ENCODE measurements at regions of chr18 and their contacts with region 1.

Region 1: GRCh38 chr18:9613550-9614400 is 584 bp downstream of the PPP4R1 start:
- DNase-seq: no peak
- ATAC-seq: peak; percentile 58
- H3K4me3 ChIP-seq: peak overlapping the region; percentile 79 to 87
- H3K27ac ChIP-seq: peak overlapping the region; percentile 88
- H3K4me1 ChIP-seq: peaks cover 45% of the 10 kb centered on the region
- H3K27me3 ChIP-seq: no peaks in the 10 kb centered on the region
- CTCF ChIP-seq: no peak

Region 2: GRCh38 chr18:9323750-9324445 is 289.9 kb before region 1 on chr18:
- CTCF ChIA-PET with region 1: no interaction called
- POLR2A ChIA-PET with region 1: no interaction called
- in situ Hi-C with region 1: no loop called
- intact Hi-C with region 1: no loop called
- DNase-seq: no peak
- ATAC-seq: no peak
- H3K4me3 ChIP-seq: no peak overlapping the region
- H3K27ac ChIP-seq: no peak overlapping the region
- H3K4me1 ChIP-seq: no peaks in the 10 kb centered on the region
- H3K27me3 ChIP-seq: no peaks in the 10 kb centered on the region
- CTCF ChIP-seq: no peak

Region 3: GRCh38 chr18:9658111-9658641 is 44.4 kb after region 1 on chr18:
- CTCF ChIA-PET with region 1: no interaction called
- POLR2A ChIA-PET with region 1: no interaction called
- in situ Hi-C with region 1: no loop called
- intact Hi-C with region 1: no loop called
- DNase-seq: no peak
- ATAC-seq: no peak
- H3K4me3 ChIP-seq: no peak overlapping the region
- H3K27ac ChIP-seq: no peak overlapping the region
- H3K4me1 ChIP-seq: peaks cover 4% of the 10 kb centered on the region
- H3K27me3 ChIP-seq: no peaks in the 10 kb centered on the region
- CTCF ChIP-seq: no peak

Region 4: DNA sequence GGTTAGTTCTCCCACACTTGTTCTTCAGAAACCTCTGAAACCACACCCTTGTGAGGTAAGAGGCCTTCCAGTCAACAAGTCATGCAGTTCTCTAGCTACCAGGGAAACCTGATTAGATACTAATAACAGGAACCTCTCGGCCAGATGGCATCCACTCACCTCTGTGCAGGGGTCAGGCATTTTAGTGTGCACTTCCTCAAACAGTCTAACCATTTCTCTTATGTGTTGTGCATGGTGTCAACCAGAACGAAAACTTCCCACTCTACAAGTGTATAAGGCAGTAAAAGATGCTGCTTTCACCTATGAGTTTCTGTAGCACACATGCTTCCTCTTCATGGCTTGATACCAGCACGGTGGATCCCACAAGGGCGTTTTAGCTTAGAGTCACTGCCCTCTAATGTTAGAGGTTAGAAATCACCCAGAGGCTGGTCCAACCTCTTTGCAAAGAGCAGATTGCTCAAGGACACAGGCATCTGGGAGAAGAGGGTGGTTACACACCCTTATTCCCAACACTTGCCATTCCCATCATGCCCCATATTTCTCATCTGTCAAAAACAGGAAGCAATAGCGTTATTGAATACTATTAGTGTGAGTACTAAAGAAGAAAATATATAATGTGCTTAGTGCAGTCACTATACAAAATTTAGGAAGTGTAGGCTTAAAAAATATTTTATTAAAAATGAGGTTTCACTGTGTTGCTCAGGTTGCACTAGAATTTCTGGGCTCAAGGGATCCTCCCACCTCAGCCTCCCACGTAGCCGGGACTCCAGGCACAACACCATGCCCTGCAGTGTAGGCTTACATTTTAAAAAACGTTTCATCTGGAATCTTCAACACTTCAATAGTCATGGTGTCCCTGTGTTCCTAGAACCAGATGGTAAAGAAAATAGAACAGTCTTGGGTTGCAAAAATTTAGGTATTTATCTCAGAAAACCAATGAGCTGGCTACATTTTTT is 59.8 kb after region 1 on chr18:
- CTCF ChIA-PET with region 1: interaction called, 3 read pairs
- POLR2A ChIA-PET with region 1: no interaction called
- in situ Hi-C with region 1: no loop called
- intact Hi-C with region 1: loop called (anchors 2 kb)
- DNase-seq: peak; percentile 41
- ATAC-seq: peak; percentile 99
- H3K4me3 ChIP-seq: no peak overlapping the region
- H3K27ac ChIP-seq: no peak overlapping the region
- H3K4me1 ChIP-seq: peaks cover 7% of the 10 kb centered on the region; the same call in 1 of the 2 replicates
- H3K27me3 ChIP-seq: no peaks in the 10 kb centered on the region
- CTCF ChIP-seq: peak; percentile 78

Measured in Panc1 (cell line).